ENCODE measurements at regions of chr1 and their contacts with region 1.

Region 1: GRCh38 chr1:7646981-7647901 is 123.9 kb upstream of the VAMP3 start:
- DNase-seq: peak in 1 of 2 experiments; percentile 62
- H3K4me3 ChIP-seq: no peak overlapping the region
- H3K27ac ChIP-seq: no peak overlapping the region
- H3K4me1 ChIP-seq: no peaks in the 10 kb centered on the region
- H3K27me3 ChIP-seq: peaks cover 54% of the 10 kb centered on the region
- CTCF ChIP-seq: peak; percentile 86

Region 2: DNA sequence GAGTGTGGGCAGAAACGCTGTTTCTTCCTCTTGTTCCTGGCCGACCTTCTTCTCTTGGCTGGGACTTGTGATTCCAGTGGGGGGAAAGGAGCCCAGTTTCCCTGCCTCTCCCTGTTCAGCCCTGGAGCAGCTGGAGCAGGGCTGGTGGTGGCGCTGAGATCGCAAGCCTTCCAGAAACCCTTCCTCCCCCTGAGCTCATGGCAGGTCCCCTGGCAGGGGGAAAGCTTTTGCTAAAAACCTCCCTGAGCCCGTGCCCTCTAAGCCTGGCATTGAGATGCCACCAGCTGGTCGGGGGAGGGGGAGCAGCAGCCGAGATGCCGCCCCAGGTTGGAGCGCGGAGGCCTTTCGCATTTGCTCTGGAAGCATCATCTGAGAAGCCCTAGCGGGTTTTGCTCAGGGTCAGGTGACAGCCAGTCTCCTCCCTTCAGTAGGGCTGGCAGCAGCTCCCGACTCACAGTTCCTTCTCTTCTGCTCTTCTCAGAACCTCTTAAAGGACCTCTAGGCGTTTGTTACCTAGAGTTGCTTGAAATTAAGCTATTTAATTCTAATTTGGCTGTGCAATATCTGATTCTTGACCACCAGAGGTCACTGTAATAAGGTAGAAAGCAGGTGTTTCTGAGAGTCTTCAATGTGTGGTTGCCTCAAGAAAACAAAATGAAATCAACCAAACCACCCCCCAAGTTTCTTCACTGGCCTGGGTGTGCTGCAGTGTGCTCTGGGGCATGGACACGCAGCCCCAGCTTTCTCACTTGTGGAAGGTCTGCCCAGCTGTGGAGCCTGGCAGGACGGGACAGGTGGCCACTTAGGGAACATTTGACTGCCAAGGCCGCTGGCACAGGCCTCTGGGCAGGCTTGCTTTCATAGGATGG is 604.7 kb before region 1 on chr1:
- CTCF ChIA-PET with region 1: interaction called, 3 read pairs
- POLR2A ChIA-PET with region 1: no interaction called
- intact Hi-C with region 1: loop called (anchors 2 kb)
- DNase-seq: no peak
- H3K4me3 ChIP-seq: no peak overlapping the region
- H3K27ac ChIP-seq: no peak overlapping the region
- H3K4me1 ChIP-seq: no peaks in the 10 kb centered on the region
- H3K27me3 ChIP-seq: peaks cover 32% of the 10 kb centered on the region
- CTCF ChIP-seq: peak; percentile 65

Region 3: DNA sequence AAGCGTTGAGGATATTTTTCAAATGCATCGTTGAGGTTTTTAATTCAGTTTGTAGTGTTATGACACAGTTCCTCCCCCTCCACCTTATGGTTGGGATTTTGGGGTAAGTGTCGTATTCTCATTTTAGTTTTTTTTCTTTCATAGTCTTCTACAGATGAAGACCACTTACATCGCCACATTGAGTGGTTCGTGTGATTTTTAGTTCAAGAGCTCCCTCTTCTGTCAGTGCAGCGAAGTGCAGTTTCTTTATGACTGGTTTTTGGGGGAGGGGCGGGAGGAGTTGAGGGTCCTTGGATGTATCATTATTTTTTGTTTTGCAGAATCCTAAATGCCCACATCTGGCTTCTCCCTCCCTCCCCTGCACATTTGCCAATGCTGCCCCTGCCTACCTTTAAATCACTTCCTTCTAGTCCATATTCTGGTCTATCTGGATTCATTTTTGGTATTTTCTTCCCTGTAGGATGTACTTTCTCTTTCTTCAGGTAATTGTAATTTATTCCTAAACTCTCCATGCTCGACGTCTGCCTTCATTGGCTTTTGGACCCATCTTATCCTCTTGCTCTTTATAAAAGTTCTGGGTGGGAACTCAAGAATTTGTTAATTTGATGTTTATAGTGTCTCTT is 428.9 kb before region 1 on chr1:
- CTCF ChIA-PET with region 1: no interaction called
- POLR2A ChIA-PET with region 1: no interaction called
- intact Hi-C with region 1: loop called (anchors 5 kb)
- DNase-seq: peak; percentile 28 to 36
- H3K4me3 ChIP-seq: no peak overlapping the region
- H3K27ac ChIP-seq: no peak overlapping the region
- H3K4me1 ChIP-seq: no peaks in the 10 kb centered on the region
- H3K27me3 ChIP-seq: peaks cover 22% of the 10 kb centered on the region
- CTCF ChIP-seq: peak; percentile 81